GM12878 (cell line): ENCODE measurements at regions of chr1 and their contacts with region 1.

Region 1: GRCh38 chr1:228082135-228082891 is at the start of gene ARF1:
- DNase-seq: peak; percentile 60
- ATAC-seq: peak; percentile 87
- H3K4me3 ChIP-seq: peak within 1 kb of the TSS; percentile 94
- H3K27ac ChIP-seq: peak within 1 kb of the TSS; percentile 96
- H3K4me1 ChIP-seq: peaks cover 31% of the 10 kb centered on the region
- H3K27me3 ChIP-seq: no peaks in the 10 kb centered on the region
- CTCF ChIP-seq: no peak
- EP300 ChIP-seq: 0 out of 4 replicates have a peak, but pooled peaks of 1 of the 2 experiments have one; percentile 10
- POLR2A ChIP-seq: peak; percentile 92
- RAD21 ChIP-seq: no peak
- polyA plus RNA-seq, gene ARF1: 48.4 to 97.3 TPM

Region 2: GRCh38 chr1:227748496-227749182 is 333.7 kb before region 1 on chr1:
- CTCF ChIA-PET with region 1: no interaction called
- POLR2A ChIA-PET with region 1: no interaction called
- RAD21 ChIA-PET with region 1: no interaction called
- SMC1A ChIA-PET with region 1: no interaction called
- in situ Hi-C with region 1: no loop called
- intact Hi-C with region 1: no loop called
- DNase-seq: no peak
- ATAC-seq: no peak
- H3K4me3 ChIP-seq: no peak overlapping the region
- H3K27ac ChIP-seq: no peak overlapping the region
- H3K4me1 ChIP-seq: no peaks in the 10 kb centered on the region
- H3K27me3 ChIP-seq: no peaks in the 10 kb centered on the region
- CTCF ChIP-seq: no peak
- EP300 ChIP-seq: no peak
- POLR2A ChIP-seq: no peak
- RAD21 ChIP-seq: no peak

Region 3: DNA sequence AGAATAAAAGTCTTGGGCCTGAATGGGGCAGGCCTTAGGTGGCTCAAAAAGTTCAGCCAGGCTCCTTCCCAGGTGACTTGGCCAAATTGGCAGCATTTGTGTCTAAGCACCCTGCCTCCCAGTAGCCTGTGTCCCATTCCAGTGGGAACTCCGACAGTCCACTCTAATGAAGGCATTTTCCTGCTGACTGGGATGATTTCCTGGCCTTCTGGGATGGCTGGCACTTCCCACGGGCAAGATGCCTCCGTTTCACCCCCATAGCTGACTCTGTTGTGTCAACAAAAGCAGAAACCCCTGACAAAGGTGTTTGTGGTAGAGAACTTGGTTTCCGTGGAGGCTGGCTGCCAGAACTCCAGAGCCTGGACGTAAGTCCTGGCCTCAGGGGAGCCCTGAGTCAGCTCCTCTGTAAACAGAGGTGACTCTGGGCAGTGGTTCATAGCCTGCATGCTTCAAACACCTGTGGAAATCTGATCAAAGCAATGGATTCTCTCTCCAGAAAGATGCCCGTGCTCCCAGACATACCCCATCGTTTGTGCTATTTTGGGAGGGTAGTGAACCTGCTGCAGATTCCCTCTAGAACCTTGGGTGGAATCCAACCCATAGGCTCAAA is 38.9 kb before region 1 on chr1:
- CTCF ChIA-PET with region 1: no interaction called
- POLR2A ChIA-PET with region 1: no interaction called
- RAD21 ChIA-PET with region 1: no interaction called
- SMC1A ChIA-PET with region 1: no interaction called
- in situ Hi-C with region 1: no loop called
- intact Hi-C with region 1: no loop called
- DNase-seq: no peak
- ATAC-seq: no peak
- H3K4me3 ChIP-seq: no peak overlapping the region
- H3K27ac ChIP-seq: no peak overlapping the region
- H3K4me1 ChIP-seq: no peaks in the 10 kb centered on the region
- H3K27me3 ChIP-seq: peaks cover 5 to 10% of the 10 kb centered on the region in 2 experiments; a peak in 3 of 4 replicates
- CTCF ChIP-seq: no peak
- EP300 ChIP-seq: no peak
- POLR2A ChIP-seq: no peak
- RAD21 ChIP-seq: no peak

Region 4: DNA sequence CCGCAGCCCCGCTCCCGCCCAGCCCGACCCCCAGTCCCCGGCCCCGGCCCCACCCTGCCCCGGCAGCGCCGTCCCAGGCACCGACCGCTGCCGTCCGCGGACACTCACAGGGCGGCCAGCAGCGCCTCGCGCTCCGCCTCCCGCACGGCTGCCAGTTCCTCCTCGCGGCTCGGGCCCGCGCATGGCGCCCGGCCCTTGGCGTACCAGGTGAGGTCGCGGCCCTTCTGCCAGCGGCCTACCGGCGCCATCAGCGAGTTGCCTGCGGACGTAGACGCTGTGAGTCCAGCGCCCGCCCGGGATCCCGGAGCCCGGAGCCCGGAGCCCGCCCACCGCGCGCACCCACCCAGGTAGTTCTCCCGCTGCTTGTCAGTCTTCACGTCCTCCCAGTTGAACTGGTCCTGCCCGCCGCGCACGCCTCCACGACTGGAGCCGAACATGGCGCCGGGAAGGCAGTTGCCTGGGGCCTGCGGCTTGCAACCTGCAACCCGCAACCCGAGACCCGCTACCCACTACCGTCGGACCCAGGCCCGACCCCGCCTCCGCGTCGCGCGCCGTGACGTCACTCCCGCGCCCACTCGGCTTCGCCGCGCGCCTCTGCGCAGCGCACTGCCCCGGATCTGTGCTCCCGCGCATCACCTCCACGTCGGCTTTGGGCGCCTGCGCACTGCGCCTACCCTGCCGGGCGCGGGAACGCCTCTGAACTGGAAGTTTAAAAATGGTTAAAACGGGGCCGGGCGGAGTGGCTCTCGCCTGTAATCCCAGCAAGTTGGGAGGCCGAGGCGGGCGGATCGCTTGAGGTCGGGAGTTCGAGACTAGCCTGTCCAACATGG is 20.7 kb after region 1 on chr1 and contains the start of gene C1orf35:
- CTCF ChIA-PET with region 1: interaction called, 5 read pairs
- POLR2A ChIA-PET with region 1: interaction called, 5 read pairs
- RAD21 ChIA-PET with region 1: interaction called, 3 read pairs
- SMC1A ChIA-PET with region 1: interaction called, 4 read pairs
- in situ Hi-C with region 1: no loop called
- intact Hi-C with region 1: loop called (anchors 2 kb)
- DNase-seq: peak; percentile 66
- ATAC-seq: peak; percentile 87
- H3K4me3 ChIP-seq: peak within 1 kb of the TSS; percentile 87
- H3K27ac ChIP-seq: peak within 1 kb of the TSS; percentile 69
- H3K4me1 ChIP-seq: peaks cover 12% of the 10 kb centered on the region
- H3K27me3 ChIP-seq: no peaks in the 10 kb centered on the region
- CTCF ChIP-seq: no peak
- EP300 ChIP-seq: no peak
- POLR2A ChIP-seq: peak; percentile 80
- RAD21 ChIP-seq: no peak
- polyA plus RNA-seq, gene C1orf35: 2.5 to 4.8 TPM

Region 5: GRCh38 chr1:228165372-228166169 is 83.3 kb after region 1 on chr1 and contains the start of gene IBA57:
- CTCF ChIA-PET with region 1: interaction called, 7 read pairs
- POLR2A ChIA-PET with region 1: interaction called, 7 read pairs
- RAD21 ChIA-PET with region 1: no interaction called
- SMC1A ChIA-PET with region 1: no interaction called
- in situ Hi-C with region 1: no loop called
- intact Hi-C with region 1: loop called (anchors 2 kb)
- DNase-seq: peak; percentile 93
- ATAC-seq: peak; percentile 90
- H3K4me3 ChIP-seq: peak within 1 kb of the TSS; percentile 95
- H3K27ac ChIP-seq: peak within 1 kb of the TSS; percentile 99
- H3K4me1 ChIP-seq: peaks cover 7% of the 10 kb centered on the region
- H3K27me3 ChIP-seq: no peaks in the 10 kb centered on the region
- CTCF ChIP-seq: peak; percentile 88 to 98 (median 92)
- EP300 ChIP-seq: peak; percentile 8 to 60; a peak in 2 of 4 replicates
- POLR2A ChIP-seq: peak; percentile 95
- RAD21 ChIP-seq: 0 out of 2 replicates have a peak, but pooled peaks have one; percentile 14
- polyA plus RNA-seq, gene IBA57: 0.51 to 0.60 TPM